ENCODE measurements at regions of chr1 and their contacts with region 1.

Region 1: DNA sequence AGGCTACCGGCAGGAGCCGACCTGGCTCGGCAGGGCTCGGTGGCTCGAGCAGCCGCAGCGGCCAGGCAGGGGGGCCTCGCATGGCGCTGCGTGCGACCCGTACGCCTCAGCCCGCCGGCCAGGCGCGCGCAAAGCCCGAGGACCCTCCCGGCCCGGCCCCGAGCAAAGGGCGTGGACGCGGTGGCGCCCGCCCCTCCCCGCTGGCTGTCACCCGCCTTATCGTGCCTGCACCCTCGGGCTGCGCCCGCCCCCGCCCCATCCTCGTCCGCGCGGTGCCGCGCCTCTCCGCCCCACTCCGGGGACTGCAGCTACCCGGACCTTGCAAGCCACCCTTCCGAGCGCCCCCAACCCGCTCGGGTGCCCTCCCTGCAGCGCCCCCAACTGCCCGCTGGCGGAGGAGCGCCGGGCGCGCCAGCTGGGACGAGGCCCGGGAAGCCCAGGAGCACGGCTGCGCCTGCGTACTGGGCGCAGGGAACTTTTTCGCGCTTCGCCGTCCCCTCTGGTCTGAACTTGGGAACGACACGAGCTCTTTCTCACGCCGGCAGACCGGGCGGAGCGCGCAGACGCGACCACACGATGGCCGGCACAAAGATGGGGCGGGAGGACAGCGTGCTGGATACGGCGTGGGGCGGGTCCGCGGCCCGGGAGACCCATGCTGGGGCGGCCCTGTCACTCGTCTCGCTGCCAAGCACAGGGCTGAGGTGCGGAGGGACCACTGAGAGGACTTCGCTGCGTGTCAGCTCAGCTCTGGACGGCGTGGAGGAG is at the start of gene ABCB10:
- DNase-seq: peak; percentile 99
- H3K4me3 ChIP-seq: peak within 1 kb of the TSS; percentile 83 to 84 (median 84)
- H3K27ac ChIP-seq: peak within 1 kb of the TSS; percentile 6
- H3K4me1 ChIP-seq: peaks cover 15% of the 10 kb centered on the region
- H3K27me3 ChIP-seq: no peaks in the 10 kb centered on the region
- CTCF ChIP-seq: peak; percentile 86 to 97
- POLR2A ChIP-seq: no peak
- total RNA-seq, gene ABCB10: 19.4 and 19.8 TPM in 2 replicates

Region 2: GRCh38 chr1:229341774-229342655 is 216.7 kb before region 1 on chr1:
- CTCF ChIA-PET with region 1: no interaction called
- POLR2A ChIA-PET with region 1: no interaction called
- dilution Hi-C with region 1: no loop called
- intact Hi-C with region 1: loop called (anchors 5 kb)
- DNase-seq: peak; percentile 75
- H3K4me3 ChIP-seq: peak overlapping the region; percentile 53 to 89 (median 80)
- H3K27ac ChIP-seq: no peak overlapping the region
- H3K4me1 ChIP-seq: peaks cover 11% of the 10 kb centered on the region
- H3K27me3 ChIP-seq: no peaks in the 10 kb centered on the region
- CTCF ChIP-seq: no peak
- POLR2A ChIP-seq: peak; percentile 18

Region 3: DNA sequence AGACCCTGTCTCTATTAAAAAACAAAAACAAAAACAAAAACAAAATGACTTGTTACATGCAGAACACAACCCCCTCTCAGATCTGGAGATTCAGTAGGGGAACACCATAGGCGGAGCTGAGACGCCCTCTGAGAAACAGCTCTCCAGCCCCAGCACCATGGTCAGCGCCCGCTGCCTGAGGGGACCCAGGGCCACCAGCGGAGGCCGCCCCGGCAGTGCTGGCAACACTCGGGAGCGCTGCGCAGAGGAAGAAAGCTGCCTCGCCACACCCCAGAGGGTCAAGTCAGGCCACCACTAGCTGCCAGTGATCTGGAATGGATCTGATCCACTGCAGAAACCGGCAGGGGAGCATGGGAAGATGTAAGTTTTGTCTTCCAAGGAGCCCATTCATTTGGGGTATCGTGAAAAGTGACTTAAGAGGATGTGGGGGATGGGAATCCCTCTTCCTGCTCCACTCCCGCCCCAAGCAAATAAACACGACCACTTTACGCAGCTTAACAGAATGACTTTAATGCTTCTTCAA is 127.9 kb before region 1 on chr1:
- CTCF ChIA-PET with region 1: no interaction called
- POLR2A ChIA-PET with region 1: no interaction called
- dilution Hi-C with region 1: no loop called
- intact Hi-C with region 1: no loop called
- DNase-seq: peak; percentile 33
- H3K4me3 ChIP-seq: no peak overlapping the region
- H3K27ac ChIP-seq: no peak overlapping the region
- H3K4me1 ChIP-seq: no peaks in the 10 kb centered on the region
- H3K27me3 ChIP-seq: peaks cover 43 to 58% of the 10 kb centered on the region in 2 experiments
- CTCF ChIP-seq: no peak
- POLR2A ChIP-seq: no peak

Region 4: DNA sequence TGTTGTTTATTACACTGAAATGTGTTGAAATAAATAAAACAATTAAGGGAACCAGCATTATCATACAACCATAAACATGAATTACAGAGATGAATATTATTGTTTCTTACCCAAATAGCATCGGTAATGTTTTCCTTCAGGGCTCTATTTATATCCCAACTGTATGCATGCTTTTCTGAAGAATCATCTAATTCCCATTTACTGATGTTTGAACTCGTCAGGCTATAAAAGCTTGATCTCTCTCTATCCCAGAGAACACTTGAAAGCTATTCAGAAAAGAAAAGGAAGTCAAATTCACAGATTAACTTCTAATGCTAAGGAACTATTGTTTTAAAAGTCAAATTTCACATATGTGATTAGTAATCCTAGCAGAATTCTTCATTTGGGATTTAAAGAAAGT is 63.0 kb before region 1 on chr1:
- CTCF ChIA-PET with region 1: no interaction called
- POLR2A ChIA-PET with region 1: no interaction called
- dilution Hi-C with region 1: no loop called
- intact Hi-C with region 1: no loop called
- DNase-seq: no peak
- H3K4me3 ChIP-seq: no peak overlapping the region
- H3K27ac ChIP-seq: no peak overlapping the region
- H3K4me1 ChIP-seq: no peaks in the 10 kb centered on the region
- H3K27me3 ChIP-seq: no peaks in the 10 kb centered on the region
- CTCF ChIP-seq: no peak
- POLR2A ChIP-seq: no peak

Region 5: GRCh38 chr1:229526695-229527094 is 32.1 kb before region 1 on chr1:
- CTCF ChIA-PET with region 1: interaction called, 10 read pairs
- POLR2A ChIA-PET with region 1: no interaction called
- dilution Hi-C with region 1: no loop called
- intact Hi-C with region 1: no loop called
- DNase-seq: no peak
- H3K4me3 ChIP-seq: no peak overlapping the region
- H3K27ac ChIP-seq: no peak overlapping the region
- H3K4me1 ChIP-seq: no peaks in the 10 kb centered on the region
- H3K27me3 ChIP-seq: no peaks in the 10 kb centered on the region
- CTCF ChIP-seq: no peak
- POLR2A ChIP-seq: no peak

Region 6: DNA sequence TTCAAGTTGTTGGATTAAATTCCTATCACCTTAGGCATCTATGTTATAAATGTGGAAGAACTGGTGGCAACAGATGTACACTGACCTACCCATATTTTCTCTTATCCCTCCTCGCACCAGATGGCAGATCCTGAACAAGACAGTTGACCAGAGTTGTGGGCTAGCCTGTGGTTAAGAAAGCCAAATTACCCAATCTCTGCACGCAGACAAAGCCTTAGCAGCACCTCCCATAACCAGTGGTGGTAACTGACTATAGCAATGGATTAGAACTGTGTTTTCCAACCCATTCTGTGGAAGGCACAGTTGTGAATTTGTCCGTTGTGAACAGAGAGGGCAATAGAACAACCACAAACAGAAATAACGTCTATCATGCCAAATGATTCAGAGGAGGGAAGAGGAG is 20.9 kb before region 1 on chr1:
- CTCF ChIA-PET with region 1: no interaction called
- POLR2A ChIA-PET with region 1: no interaction called
- dilution Hi-C with region 1: no loop called
- intact Hi-C with region 1: no loop called
- DNase-seq: no peak
- H3K4me3 ChIP-seq: no peak overlapping the region
- H3K27ac ChIP-seq: no peak overlapping the region
- H3K4me1 ChIP-seq: no peaks in the 10 kb centered on the region
- H3K27me3 ChIP-seq: no peaks in the 10 kb centered on the region
- CTCF ChIP-seq: no peak
- POLR2A ChIP-seq: no peak

Region 7: DNA sequence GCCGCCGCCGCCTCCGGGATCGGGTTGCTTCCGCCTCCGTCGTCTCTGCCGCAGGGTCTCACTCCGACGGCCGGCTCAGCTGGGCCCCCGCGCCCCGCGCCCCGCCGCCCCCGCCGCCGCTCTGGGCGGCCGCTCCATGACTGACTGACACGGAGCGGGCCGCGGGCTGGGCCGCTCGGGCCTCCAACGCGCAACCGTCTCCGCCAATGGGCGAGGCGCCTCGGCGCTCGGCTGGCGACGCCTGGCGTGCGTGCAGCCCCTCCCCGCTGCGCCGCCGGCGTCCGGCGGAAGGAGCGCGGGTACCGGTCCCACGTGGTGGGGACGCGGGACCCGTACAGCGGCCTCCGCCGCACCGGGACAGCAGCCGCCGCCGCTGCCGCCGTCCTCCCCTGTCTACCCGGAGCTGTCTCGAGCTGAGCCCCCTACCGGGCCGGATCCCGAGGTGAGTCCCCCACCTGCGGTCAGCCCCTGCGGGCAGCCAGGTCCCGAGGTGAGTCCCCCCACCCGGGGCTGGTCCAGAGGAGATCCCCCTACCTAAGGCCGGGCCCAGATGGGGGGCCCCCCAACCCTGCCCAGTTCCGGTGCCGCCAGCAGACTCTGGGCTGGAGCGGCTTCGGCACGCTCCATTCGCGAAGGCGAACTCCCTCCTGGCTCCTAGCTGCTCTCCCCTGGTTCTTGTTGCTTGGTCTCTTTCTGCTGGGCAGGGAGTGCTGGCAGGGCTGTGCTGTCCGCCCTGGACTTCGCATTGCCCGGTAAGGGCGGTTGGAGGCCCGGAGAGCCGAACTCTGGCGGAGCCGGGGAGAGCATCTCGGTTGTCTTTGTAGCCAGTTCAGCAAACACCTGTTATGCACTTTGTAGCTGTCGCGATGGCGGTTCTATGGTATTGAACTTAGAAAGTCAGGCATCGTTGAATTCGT is 67.4 kb after region 1 on chr1 and contains the starts of genes TAF5L and URB2:
- CTCF ChIA-PET with region 1: interaction called, 69 read pairs
- POLR2A ChIA-PET with region 1: interaction called, 4 read pairs
- dilution Hi-C with region 1: no loop called
- intact Hi-C with region 1: loop called (anchors 1 kb)
- DNase-seq: peak; percentile 84
- H3K4me3 ChIP-seq: peak within 1 kb of the TSS; percentile 75 to 98 (median 96)
- H3K27ac ChIP-seq: peak within 1 kb of the TSS; percentile 41
- H3K4me1 ChIP-seq: peaks cover 16% of the 10 kb centered on the region
- H3K27me3 ChIP-seq: no peaks in the 10 kb centered on the region
- CTCF ChIP-seq: no peak
- POLR2A ChIP-seq: peak; percentile 69
- total RNA-seq, gene TAF5L: 20.3 and 24.8 TPM in 2 replicates
- total RNA-seq, gene URB2: 12.4 and 12.7 TPM in 2 replicates

Region 8: GRCh38 chr1:230280906-230281413 is 722.2 kb after region 1 on chr1:
- CTCF ChIA-PET with region 1: no interaction called
- POLR2A ChIA-PET with region 1: no interaction called
- dilution Hi-C with region 1: no loop called
- intact Hi-C with region 1: loop called (anchors 1 kb)
- DNase-seq: no peak
- H3K4me3 ChIP-seq: no peak overlapping the region
- H3K27ac ChIP-seq: no peak overlapping the region
- H3K4me1 ChIP-seq: peaks cover 5% of the 10 kb centered on the region
- H3K27me3 ChIP-seq: no peaks in the 10 kb centered on the region
- CTCF ChIP-seq: no peak
- POLR2A ChIP-seq: no peak

Measured in endothelial cell of umbilical vein (primary cell).